ENCODE measurements at regions of chr6 and their contacts with region 1.

Region 1: GRCh38 chr6:4055420-4056041 is 23.4 kb downstream of the FAM217A start:
- DNase-seq: peak; percentile 15
- H3K4me3 Mint-ChIP-seq: no peak overlapping the region
- H3K27ac Mint-ChIP-seq: no peak overlapping the region
- H3K4me1 Mint-ChIP-seq: peaks cover 40% of the 10 kb centered on the region
- H3K27me3 Mint-ChIP-seq: no peaks in the 10 kb centered on the region

Region 2: DNA sequence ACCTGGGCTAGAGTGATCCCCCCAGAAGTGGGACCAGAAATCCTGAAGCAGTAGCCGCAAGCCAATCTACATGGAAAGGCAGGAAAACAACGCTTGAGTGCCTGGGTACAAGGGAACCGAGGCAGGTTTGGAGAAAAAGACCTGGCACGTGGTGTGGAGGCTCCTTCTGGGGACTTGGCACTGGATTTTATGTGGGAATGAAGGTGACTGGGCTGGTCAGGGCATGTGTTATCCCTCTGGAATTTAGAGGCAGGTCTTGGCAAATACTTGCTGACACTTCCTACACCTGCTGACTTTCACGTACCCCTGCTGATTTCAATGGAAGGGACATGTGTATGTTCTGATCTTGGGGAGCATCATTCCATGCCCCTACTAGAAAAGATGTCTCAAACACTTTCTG is 48.4 kb after region 1 on chr6:
- CTCF ChIA-PET with region 1: no interaction called
- POLR2A ChIA-PET with region 1: no interaction called
- DNase-seq: no peak
- H3K4me3 Mint-ChIP-seq: no peak overlapping the region
- H3K27ac Mint-ChIP-seq: no peak overlapping the region
- H3K4me1 Mint-ChIP-seq: no peaks in the 10 kb centered on the region
- H3K27me3 Mint-ChIP-seq: peaks cover 13% of the 10 kb centered on the region

Region 3: GRCh38 chr6:4135665-4136353 is 80.3 kb after region 1 on chr6:
- CTCF ChIA-PET with region 1: interaction called, 17 read pairs
- POLR2A ChIA-PET with region 1: interaction called, 9 read pairs
- DNase-seq: peak; percentile 91
- H3K4me3 Mint-ChIP-seq: peak overlapping the region; percentile 83
- H3K27ac Mint-ChIP-seq: peak overlapping the region; percentile 85
- H3K4me1 Mint-ChIP-seq: peaks cover 31% of the 10 kb centered on the region
- H3K27me3 Mint-ChIP-seq: no peaks in the 10 kb centered on the region

Region 4: GRCh38 chr6:4155848-4156466 is 100.4 kb after region 1 on chr6:
- CTCF ChIA-PET with region 1: interaction called, 20 read pairs
- POLR2A ChIA-PET with region 1: no interaction called
- DNase-seq: peak; percentile 88
- H3K4me3 Mint-ChIP-seq: no peak overlapping the region
- H3K27ac Mint-ChIP-seq: no peak overlapping the region
- H3K4me1 Mint-ChIP-seq: peaks cover 7% of the 10 kb centered on the region
- H3K27me3 Mint-ChIP-seq: peaks cover 10% of the 10 kb centered on the region

Region 5: GRCh38 chr6:4210629-4211423 is 155.3 kb after region 1 on chr6:
- CTCF ChIA-PET with region 1: interaction called, 10 read pairs
- POLR2A ChIA-PET with region 1: no interaction called
- DNase-seq: peak; percentile 72
- H3K4me3 Mint-ChIP-seq: no peak overlapping the region
- H3K27ac Mint-ChIP-seq: no peak overlapping the region
- H3K4me1 Mint-ChIP-seq: peaks cover 28% of the 10 kb centered on the region
- H3K27me3 Mint-ChIP-seq: peaks cover 8% of the 10 kb centered on the region